Activated T-helper 1 cell treated with anti-CD3 and anti-CD28 coated beads, Interleukin-12 subunit alpha, Interleukin-12 subunit beta, Interleukin-2, Interleukin-4 antibody, amounts not matched to agents 30 ng/mL and 10 ng/mL and 1 ng/mL, durations not matched to agents 14 hours and 24 hours and 36 hours (primary cell): ENCODE measurements at regions of chr6 and their contacts with region 1.

Region 1: GRCh38 chr6:70955441-70956190 is 1.2 kb downstream of the B3GAT2 start:
- DNase-seq: peak; percentile 71
- H3K4me3 Mint-ChIP-seq: peak overlapping the region; percentile 78
- H3K27ac Mint-ChIP-seq: no peak overlapping the region
- H3K4me1 Mint-ChIP-seq: peaks cover 5% of the 10 kb centered on the region
- H3K27me3 Mint-ChIP-seq: peaks cover 67% of the 10 kb centered on the region

Region 2: GRCh38 chr6:70221025-70221714 is 734.4 kb before region 1 on chr6:
- intact Hi-C with region 1: loop called (anchors 1 kb)
- DNase-seq: no peak
- H3K4me3 Mint-ChIP-seq: no peak overlapping the region
- H3K27ac Mint-ChIP-seq: no peak overlapping the region
- H3K4me1 Mint-ChIP-seq: no peaks in the 10 kb centered on the region
- H3K27me3 Mint-ChIP-seq: peaks cover 4% of the 10 kb centered on the region

Region 3: DNA sequence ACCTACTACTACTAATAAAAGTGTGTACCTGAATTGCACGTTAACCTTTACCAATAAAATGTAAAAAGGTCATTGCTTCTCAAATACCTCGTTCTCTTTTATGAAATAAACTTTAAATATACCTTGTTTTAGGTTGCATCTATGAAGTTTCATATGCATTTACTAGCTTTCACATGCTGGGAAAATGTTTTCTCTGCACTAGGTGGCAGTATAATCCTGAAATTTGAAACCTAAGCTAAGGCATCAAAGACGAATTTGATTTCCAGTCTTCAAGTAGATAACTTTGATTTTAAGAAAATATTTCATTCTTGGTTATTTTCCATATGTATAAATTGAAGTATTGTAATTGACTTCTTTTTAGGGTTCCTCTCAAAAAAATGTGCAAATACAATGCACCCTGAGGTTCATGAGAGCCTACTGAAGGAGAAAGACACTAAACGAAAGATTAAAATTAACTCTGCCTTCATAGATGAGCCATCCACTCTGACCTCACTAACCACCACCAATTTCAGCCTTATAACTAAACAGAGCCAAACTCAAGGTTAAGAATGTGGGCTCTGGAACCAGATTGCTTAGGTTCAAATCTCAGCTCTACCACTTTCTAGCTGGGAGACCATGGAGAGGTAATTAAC is 645.4 kb before region 1 on chr6:
- intact Hi-C with region 1: loop called (anchors 5 kb)
- DNase-seq: no peak
- H3K4me3 Mint-ChIP-seq: no peak overlapping the region
- H3K27ac Mint-ChIP-seq: no peak overlapping the region
- H3K4me1 Mint-ChIP-seq: peaks cover 6% of the 10 kb centered on the region
- H3K27me3 Mint-ChIP-seq: peaks cover 4% of the 10 kb centered on the region

Region 4: DNA sequence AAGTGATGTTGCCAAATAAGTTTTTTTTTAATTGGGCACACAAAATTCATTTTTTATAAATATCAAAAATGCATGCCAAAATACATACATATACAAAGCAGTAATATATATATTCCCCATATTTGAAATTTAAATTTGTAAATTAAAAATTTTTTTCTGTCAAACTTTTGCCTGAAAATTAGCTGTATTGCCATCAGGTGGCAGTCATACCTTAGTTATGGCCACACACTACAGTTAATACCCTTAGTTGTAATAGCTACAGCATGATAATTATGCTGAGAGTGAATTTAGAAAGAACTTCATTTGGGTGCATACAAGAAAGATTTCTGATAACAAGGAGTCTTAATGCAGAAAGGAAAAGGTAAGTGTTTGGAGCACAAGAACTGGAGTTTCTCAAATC is 435.0 kb before region 1 on chr6:
- intact Hi-C with region 1: loop called (anchors 1 kb)
- DNase-seq: no peak
- H3K4me3 Mint-ChIP-seq: no peak overlapping the region
- H3K27ac Mint-ChIP-seq: no peak overlapping the region
- H3K4me1 Mint-ChIP-seq: peaks cover 7% of the 10 kb centered on the region
- H3K27me3 Mint-ChIP-seq: no peaks in the 10 kb centered on the region

Region 5: DNA sequence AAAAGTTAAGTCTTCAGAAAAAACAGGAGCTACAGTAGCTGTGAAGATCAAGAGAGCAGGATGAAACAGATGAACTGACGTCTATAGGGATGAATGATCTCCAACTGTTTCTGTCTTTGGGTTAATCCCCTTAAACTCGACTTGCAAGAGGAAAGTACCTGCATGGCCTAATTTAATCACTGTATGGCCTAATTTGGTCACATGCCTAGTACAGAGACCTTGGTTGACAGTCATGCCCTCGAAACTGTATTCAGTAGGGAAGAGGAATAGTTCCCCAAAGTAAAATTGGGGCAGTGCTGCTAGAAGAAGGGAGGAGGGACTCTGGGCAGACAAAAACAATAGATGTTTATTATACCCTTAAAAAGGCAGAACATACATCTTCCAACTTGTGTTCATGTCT is 297.9 kb before region 1 on chr6:
- intact Hi-C with region 1: no loop called
- DNase-seq: no peak
- H3K4me3 Mint-ChIP-seq: no peak overlapping the region
- H3K27ac Mint-ChIP-seq: no peak overlapping the region
- H3K4me1 Mint-ChIP-seq: peaks cover 5% of the 10 kb centered on the region
- H3K27me3 Mint-ChIP-seq: peaks cover 5% of the 10 kb centered on the region

Region 6: GRCh38 chr6:70706491-70707123 is 249.0 kb before region 1 on chr6:
- intact Hi-C with region 1: loop called (anchors 1 kb)
- DNase-seq: no peak
- H3K4me3 Mint-ChIP-seq: no peak overlapping the region
- H3K27ac Mint-ChIP-seq: no peak overlapping the region
- H3K4me1 Mint-ChIP-seq: peaks cover 14% of the 10 kb centered on the region
- H3K27me3 Mint-ChIP-seq: no peaks in the 10 kb centered on the region